Endothelial cell of umbilical vein (primary cell): ENCODE measurements at regions of chr9 and their contacts with region 1.

Region 1: DNA sequence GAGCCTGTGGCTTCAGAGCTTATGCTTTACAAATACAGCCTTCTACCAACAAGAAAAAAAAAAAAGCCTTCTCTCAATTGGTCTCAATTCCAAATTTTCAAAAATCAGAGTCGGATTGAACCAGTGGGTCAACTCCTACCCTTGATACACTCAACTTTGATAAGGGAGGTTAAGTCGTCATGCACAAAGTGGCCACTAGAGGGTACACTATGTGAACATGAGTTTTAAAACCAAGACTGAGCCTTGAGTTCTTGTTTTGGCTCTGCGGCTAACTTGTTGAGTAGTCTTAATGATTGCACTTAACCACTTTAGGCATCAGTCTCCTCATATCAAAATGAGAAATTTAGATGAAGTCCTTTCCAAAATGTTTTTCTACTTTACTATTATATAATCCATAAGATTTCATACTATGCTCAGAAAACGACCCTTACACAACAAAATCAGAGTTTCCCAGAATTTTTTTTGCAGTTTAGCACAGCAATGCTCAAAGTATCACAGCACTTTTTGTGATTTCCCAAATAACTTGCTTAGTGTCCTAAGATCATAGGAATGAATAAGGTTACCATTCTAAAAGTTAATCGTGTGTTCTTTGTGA is 92.9 kb upstream of the MTAP start:
- DNase-seq: peak; percentile 69
- H3K4me3 ChIP-seq: no peak overlapping the region
- H3K27ac ChIP-seq: no peak overlapping the region
- H3K4me1 ChIP-seq: no peaks in the 10 kb centered on the region
- H3K27me3 ChIP-seq: no peaks in the 10 kb centered on the region
- CTCF ChIP-seq: peak; percentile 67 to 74
- POLR2A ChIP-seq: no peak

Region 2: GRCh38 chr9:21720758-21721157 is 11.2 kb after region 1 on chr9:
- CTCF ChIA-PET with region 1: interaction called, 11 read pairs
- POLR2A ChIA-PET with region 1: no interaction called
- dilution Hi-C with region 1: no loop called
- intact Hi-C with region 1: no loop called
- DNase-seq: no peak
- H3K4me3 ChIP-seq: no peak overlapping the region
- H3K27ac ChIP-seq: no peak overlapping the region
- H3K4me1 ChIP-seq: no peaks in the 10 kb centered on the region
- H3K27me3 ChIP-seq: peaks cover 0 to 12% of the 10 kb centered on the region in 2 experiments
- CTCF ChIP-seq: no peak
- POLR2A ChIP-seq: no peak

Region 3: DNA sequence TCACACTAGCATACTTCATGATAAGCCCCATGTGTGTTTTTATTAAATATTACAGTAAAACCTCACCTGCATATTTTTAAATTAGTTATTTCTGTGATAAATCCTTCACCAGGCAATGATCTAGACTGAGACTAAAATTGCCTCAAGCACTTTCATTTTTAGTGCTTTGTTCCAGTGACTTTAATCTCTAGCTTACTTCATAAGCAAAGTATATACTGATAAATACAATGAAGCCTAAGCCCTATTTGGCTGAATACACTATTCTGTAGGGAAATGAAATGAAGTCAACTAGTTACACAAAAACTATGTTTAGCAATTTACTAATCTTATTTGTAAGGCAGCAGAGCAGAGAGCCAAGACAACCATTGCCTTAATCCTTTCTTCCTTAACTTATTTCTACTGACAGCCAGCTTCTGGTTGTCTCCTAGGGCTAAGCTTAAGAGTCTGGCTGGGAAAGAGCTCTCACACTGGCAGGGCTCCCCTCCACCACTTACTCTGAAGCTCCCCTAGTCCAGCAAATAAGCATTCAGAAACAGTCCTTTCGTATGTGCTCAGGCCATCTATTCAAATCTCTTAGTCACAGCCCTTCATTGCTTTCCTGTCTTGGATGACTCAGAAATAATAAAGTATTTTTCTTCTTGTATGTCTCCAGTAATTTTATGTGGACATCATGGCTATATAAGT is 61.5 kb after region 1 on chr9:
- CTCF ChIA-PET with region 1: interaction called, 9 read pairs
- POLR2A ChIA-PET with region 1: no interaction called
- dilution Hi-C with region 1: no loop called
- intact Hi-C with region 1: loop called (anchors 5 kb)
- DNase-seq: peak; percentile 85
- H3K4me3 ChIP-seq: peak overlapping the region in 1 of 3 experiments; percentile 21
- H3K27ac ChIP-seq: peak overlapping the region; percentile 67
- H3K4me1 ChIP-seq: peaks cover 13% of the 10 kb centered on the region
- H3K27me3 ChIP-seq: peaks cover 0 to 2% of the 10 kb centered on the region in 2 experiments
- CTCF ChIP-seq: no peak
- POLR2A ChIP-seq: no peak

Region 4: DNA sequence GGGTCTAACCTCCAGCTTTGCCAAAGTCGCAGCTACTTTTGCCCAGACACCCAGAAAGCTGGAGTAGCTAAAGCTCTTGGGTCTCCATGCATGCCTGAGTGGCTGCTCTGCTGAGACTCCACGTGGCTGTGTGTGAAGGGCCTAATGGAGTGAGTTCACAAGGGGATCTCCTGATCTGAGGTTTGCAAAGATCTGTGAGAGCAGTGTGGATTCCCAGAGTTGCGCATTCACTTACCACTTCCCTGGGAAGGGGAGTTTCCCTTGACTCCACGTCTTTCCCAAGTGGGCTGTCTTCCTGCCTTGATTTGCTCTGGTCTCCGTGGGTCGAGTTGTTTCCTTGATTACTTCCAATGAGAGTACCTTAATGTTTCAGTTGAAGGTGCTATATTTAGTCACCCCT is 317.1 kb after region 1 on chr9:
- CTCF ChIA-PET with region 1: no interaction called
- POLR2A ChIA-PET with region 1: no interaction called
- dilution Hi-C with region 1: no loop called
- intact Hi-C with region 1: no loop called
- DNase-seq: no peak
- H3K4me3 ChIP-seq: no peak overlapping the region
- H3K27ac ChIP-seq: no peak overlapping the region
- H3K4me1 ChIP-seq: peaks cover 12% of the 10 kb centered on the region
- H3K27me3 ChIP-seq: peaks cover 0 to 2% of the 10 kb centered on the region in 2 experiments
- CTCF ChIP-seq: no peak
- POLR2A ChIP-seq: no peak